Stomach (tissue), 19 donors: ENCODE measurements at regions of chr5 and their contacts with region 1.

Region 1: GRCh38 chr5:95781101-95781583 is 41.4 kb downstream of the GLRX start:
- DNase-seq: peak; percentile 89 to 93
- H3K4me3 ChIP-seq: no peak overlapping the region
- H3K27ac ChIP-seq: peak overlapping the region; percentile 42 to 79 (median 62)
- H3K4me1 ChIP-seq: peaks cover 4 to 51% (median 24%) of the 10 kb centered on the region in 4 donors
- H3K27me3 ChIP-seq: no peaks in the 10 kb centered on the region
- CTCF ChIP-seq: peak in 5 of 7 experiments; percentile 64 to 93 (median 86)
- EP300 ChIP-seq: no peak
- POLR2A ChIP-seq: no peak

Region 2: GRCh38 chr5:95519151-95519550 is 262.0 kb before region 1 on chr5:
- intact Hi-C with region 1: no loop called
- DNase-seq: no peak
- H3K4me3 ChIP-seq: no peak overlapping the region
- H3K27ac ChIP-seq: no peak overlapping the region
- H3K4me1 ChIP-seq: no peaks in the 10 kb centered on the region
- H3K27me3 ChIP-seq: no peaks in the 10 kb centered on the region
- CTCF ChIP-seq: no peak
- EP300 ChIP-seq: no peak
- POLR2A ChIP-seq: no peak

Region 3: DNA sequence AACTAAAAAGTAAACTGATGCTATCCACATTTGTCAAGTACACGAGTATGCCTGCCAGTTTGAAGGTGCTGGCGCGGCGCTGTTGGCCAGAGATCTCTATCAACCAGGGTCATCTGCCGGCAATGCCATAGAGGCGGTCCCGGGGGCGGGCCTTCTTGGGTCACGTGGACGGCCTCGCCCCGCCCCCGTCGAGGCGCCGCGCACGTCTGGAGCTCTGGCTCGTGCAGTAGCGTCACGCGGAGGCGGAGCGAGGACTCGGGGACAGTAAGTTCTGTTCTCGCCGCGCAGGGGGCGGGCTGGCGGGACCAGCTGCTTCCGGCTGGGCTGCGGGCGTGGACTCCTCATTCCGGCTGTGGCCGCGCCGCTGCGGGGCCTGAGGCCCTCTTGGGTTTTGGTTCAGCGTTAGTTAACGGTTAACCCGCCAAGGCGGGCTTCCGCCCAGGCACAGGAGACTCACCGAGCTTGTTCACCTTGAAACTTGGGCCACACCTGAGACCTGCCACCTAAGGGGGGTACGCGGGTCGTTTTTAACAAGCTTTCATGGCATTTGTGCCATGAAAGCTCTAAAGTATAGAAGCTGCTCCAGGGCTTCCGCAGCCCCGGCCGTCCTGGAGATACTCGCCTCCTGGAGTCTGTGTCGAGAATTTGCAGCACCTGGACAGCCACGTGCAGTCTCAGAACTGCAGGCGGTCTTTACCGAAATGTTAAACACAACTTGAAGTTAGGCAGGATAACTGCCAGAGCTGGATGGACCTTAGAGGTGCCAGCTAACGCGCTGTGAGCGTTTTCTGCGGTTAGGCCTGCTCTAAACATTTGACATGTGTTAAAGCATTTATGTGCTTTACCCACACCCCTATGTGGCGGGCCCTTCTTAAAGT is 134.3 kb before region 1 on chr5 and contains the start of gene RFESD:
- intact Hi-C with region 1: loop called (anchors 10 kb)
- DNase-seq: peak; percentile 99 to 100
- H3K4me3 ChIP-seq: peak within 1 kb of the TSS; percentile 38 to 53 (median 49)
- H3K27ac ChIP-seq: peak within 1 kb of the TSS; percentile 95 to 99 (median 96)
- H3K4me1 ChIP-seq: peaks cover 17 to 40% (median 28%) of the 10 kb centered on the region in 4 donors
- H3K27me3 ChIP-seq: no peaks in the 10 kb centered on the region
- CTCF ChIP-seq: peak in 1 of 7 experiments; percentile 21
- EP300 ChIP-seq: peak; percentile 99
- POLR2A ChIP-seq: peak in 2 of 4 donors; percentile 89 to 92
- total RNA-seq, gene RFESD: 2.0 TPM in 1 of 5 donors, not detected in the others

Region 4: GRCh38 chr5:95846554-95847260 is 65.6 kb after region 1 on chr5:
- intact Hi-C with region 1: loop called (anchors 10 kb)
- DNase-seq: peak; percentile 87 to 91
- H3K4me3 ChIP-seq: no peak overlapping the region
- H3K27ac ChIP-seq: peak overlapping the region; percentile 73 to 93 (median 85)
- H3K4me1 ChIP-seq: peaks cover 13 to 53% (median 37%) of the 10 kb centered on the region in 4 donors
- H3K27me3 ChIP-seq: no peaks in the 10 kb centered on the region
- CTCF ChIP-seq: peak in 6 of 7 experiments; percentile 85 to 95 (median 91)
- EP300 ChIP-seq: no peak
- POLR2A ChIP-seq: no peak